ENCODE measurements at regions of chr2 and their contacts with region 1.

Region 1: GRCh38 chr2:241986836-241987641 is 117.5 kb downstream of the RTP5 start:
- DNase-seq: no peak
- ATAC-seq: no peak
- H3K4me3 ChIP-seq: no peak overlapping the region
- H3K4me3 Mint-ChIP-seq: no peak overlapping the region
- H3K27ac ChIP-seq: no peak overlapping the region
- H3K27ac Mint-ChIP-seq: no peak overlapping the region
- H3K4me1 ChIP-seq: peaks cover 15% of the 10 kb centered on the region
- H3K4me1 Mint-ChIP-seq: peaks cover 16% of the 10 kb centered on the region
- H3K27me3 ChIP-seq: no peaks in the 10 kb centered on the region
- H3K27me3 Mint-ChIP-seq: no peaks in the 10 kb centered on the region
- CTCF ChIP-seq: no peak

Region 2: DNA sequence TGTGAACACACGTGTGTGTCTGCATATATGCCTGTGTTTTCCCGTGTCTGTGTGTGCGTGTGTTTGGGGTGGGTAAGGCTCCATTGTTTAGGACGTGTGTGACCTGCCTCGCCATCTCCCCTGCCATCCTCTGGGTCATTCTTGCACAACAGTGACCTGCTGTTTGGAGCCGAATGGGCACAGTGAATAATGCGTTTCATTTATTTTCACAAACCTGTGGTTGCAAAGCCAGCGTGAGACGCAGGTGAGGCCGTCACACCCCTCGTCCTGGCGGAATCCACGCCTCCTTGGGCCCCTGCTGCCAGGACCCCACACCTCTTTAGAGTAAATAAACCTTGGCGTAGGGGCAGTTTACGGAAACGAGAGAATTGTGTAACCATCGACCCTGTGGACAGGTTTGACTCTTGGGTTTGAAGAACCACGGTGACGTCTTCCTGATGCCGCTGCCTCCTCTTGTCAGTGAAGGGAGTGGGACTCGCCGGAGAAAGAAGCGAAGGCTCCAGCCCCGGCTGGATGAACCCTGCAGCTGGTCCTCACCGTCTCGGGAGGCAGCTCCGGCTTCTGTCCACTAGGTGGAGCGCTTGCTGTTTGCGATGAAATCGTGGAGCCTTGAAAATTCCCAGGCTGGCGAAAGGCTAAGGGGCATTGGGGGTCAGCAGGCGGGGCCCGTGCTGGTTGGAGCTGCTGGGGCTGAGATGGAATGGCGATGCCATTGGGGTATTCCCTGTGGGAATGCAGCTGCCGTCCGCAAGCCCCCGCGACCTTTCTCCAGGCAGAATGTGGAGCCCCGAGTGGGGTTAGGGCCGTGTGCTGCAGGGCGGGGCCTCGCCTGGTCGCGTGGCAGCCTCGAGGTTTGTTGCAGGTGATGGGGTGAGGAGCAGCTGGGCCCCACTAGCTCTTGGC is 36.4 kb before region 1 on chr2:
- CTCF ChIA-PET with region 1: interaction called, 4 read pairs
- POLR2A ChIA-PET with region 1: no interaction called
- intact Hi-C with region 1: loop called in 1 of 2 experiments (anchors 5 kb)
- DNase-seq: peak; percentile 37 to 79 (median 66)
- ATAC-seq: no peak
- H3K4me3 ChIP-seq: no peak overlapping the region
- H3K4me3 Mint-ChIP-seq: no peak overlapping the region
- H3K27ac ChIP-seq: no peak overlapping the region
- H3K27ac Mint-ChIP-seq: no peak overlapping the region
- H3K4me1 ChIP-seq: peaks cover 4% of the 10 kb centered on the region
- H3K4me1 Mint-ChIP-seq: no peaks in the 10 kb centered on the region
- H3K27me3 ChIP-seq: no peaks in the 10 kb centered on the region
- H3K27me3 Mint-ChIP-seq: no peaks in the 10 kb centered on the region
- CTCF ChIP-seq: peak; percentile 70

Region 3: DNA sequence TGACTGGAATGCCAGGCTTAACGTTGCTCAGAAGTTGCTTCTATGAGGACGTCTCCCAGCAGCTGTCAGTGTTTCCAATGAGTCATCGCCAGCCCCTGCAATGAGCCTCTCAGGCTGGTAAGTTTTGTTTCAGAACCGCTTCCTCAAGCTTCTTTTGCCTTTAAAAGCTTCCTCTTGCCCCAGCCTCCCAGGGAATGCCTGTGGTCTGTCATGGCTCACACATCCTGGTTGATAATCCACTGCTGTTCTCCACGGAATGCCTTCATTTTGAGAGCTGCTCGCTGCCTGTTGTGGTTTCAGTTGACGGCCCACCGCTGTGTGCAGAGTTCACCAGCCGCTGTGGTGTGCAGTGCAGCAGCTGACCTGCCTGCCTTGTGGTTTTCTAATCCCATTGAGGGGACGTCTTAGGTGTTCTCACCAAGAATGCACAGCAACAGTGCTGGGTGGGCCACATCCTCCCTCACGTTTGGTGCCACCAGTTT is 21.1 kb before region 1 on chr2:
- CTCF ChIA-PET with region 1: no interaction called
- POLR2A ChIA-PET with region 1: no interaction called
- intact Hi-C with region 1: loop called (anchors 1 kb)
- DNase-seq: peak; percentile 19 to 81 (median 65)
- ATAC-seq: peak; percentile 88
- H3K4me3 ChIP-seq: peak overlapping the region; percentile 24 to 32
- H3K4me3 Mint-ChIP-seq: peak overlapping the region; percentile 78
- H3K27ac ChIP-seq: peak overlapping the region; percentile 4 to 52
- H3K27ac Mint-ChIP-seq: peak overlapping the region; percentile 89
- H3K4me1 ChIP-seq: peaks cover 15% of the 10 kb centered on the region
- H3K4me1 Mint-ChIP-seq: peaks cover 17% of the 10 kb centered on the region
- H3K27me3 ChIP-seq: no peaks in the 10 kb centered on the region
- H3K27me3 Mint-ChIP-seq: no peaks in the 10 kb centered on the region
- CTCF ChIP-seq: no peak

Region 4: GRCh38 chr2:242031481-242032019 is 44.5 kb after region 1 on chr2:
- CTCF ChIA-PET with region 1: no interaction called
- POLR2A ChIA-PET with region 1: no interaction called
- intact Hi-C with region 1: loop called in 1 of 2 experiments (anchors 1 kb)
- DNase-seq: peak; percentile 22 to 86 (median 63)
- ATAC-seq: peak; percentile 92
- H3K4me3 ChIP-seq: peak overlapping the region; percentile 51
- H3K4me3 Mint-ChIP-seq: peak overlapping the region; percentile 87
- H3K27ac ChIP-seq: peak overlapping the region in 1 of 2 experiments; percentile 54
- H3K27ac Mint-ChIP-seq: peak overlapping the region; percentile 93
- H3K4me1 ChIP-seq: peaks cover 39% of the 10 kb centered on the region
- H3K4me1 Mint-ChIP-seq: peaks cover 31% of the 10 kb centered on the region
- H3K27me3 ChIP-seq: peaks cover 0 to 20% of the 10 kb centered on the region in 2 experiments
- H3K27me3 Mint-ChIP-seq: no peaks in the 10 kb centered on the region
- CTCF ChIP-seq: no peak

Measured in CD8-positive, alpha-beta T cell (primary cell).